ENCODE measurements at regions of chr10 and their contacts with region 1.

Region 1: DNA sequence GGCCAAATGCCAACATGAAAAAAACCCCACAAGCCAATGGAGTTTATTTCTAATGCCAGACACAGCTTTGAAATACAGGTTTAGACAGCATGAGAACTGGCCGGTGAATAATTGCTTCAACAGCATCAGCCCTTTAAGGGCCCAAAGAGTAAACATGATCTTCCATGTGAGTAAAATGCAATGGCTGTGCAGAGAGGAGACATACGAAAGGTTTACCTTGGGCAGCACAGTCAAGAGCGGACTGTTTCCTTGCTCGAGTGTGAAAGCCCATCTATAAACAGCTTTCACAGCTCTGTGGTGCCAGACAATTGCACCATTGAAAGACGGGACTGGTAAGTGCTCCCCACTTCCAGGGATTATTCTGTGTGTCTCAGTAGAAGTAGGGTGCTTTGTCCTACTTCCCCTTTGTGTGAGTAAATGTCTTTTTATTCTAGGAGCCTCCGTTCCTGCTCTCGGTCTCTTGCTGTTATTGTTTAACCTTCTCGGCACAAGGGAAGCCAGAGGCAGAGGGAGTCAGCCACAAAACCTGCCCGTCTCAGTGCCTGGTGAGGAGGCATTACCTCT is 77.8 kb upstream of the KAT6B start:
- DNase-seq: no peak
- CTCF ChIP-seq: no peak

Region 2: GRCh38 chr10:74282151-74282850 is 466.2 kb before region 1 on chr10:
- in situ Hi-C with region 1: loop called (anchors 10 kb)
- DNase-seq: no peak
- CTCF ChIP-seq: no peak

Region 3: GRCh38 chr10:74967911-74968645 is 219.5 kb after region 1 on chr10:
- in situ Hi-C with region 1: no loop called
- DNase-seq: no peak
- CTCF ChIP-seq: no peak